ENCODE measurements at regions of chr1 and their contacts with region 1.

Region 1: GRCh38 chr1:94463765-94464330 is 45.7 kb downstream of the ABCD3 start:
- DNase-seq: no peak
- H3K4me3 Mint-ChIP-seq: no peak overlapping the region
- H3K27ac Mint-ChIP-seq: no peak overlapping the region
- H3K4me1 Mint-ChIP-seq: no peaks in the 10 kb centered on the region
- H3K27me3 Mint-ChIP-seq: no peaks in the 10 kb centered on the region

Region 2: GRCh38 chr1:94045465-94046056 is 418.3 kb before region 1 on chr1:
- CTCF ChIA-PET with region 1: interaction called, 6 read pairs
- POLR2A ChIA-PET with region 1: no interaction called
- intact Hi-C with region 1: loop called (anchors 1 kb)
- DNase-seq: peak; percentile 50
- H3K4me3 Mint-ChIP-seq: peak overlapping the region; percentile 41
- H3K27ac Mint-ChIP-seq: no peak overlapping the region
- H3K4me1 Mint-ChIP-seq: peaks cover 6% of the 10 kb centered on the region
- H3K27me3 Mint-ChIP-seq: peaks cover 13% of the 10 kb centered on the region

Region 3: GRCh38 chr1:94061513-94062443 is 402.1 kb before region 1 on chr1:
- CTCF ChIA-PET with region 1: interaction called, 15 read pairs
- POLR2A ChIA-PET with region 1: no interaction called
- intact Hi-C with region 1: loop called (anchors 1 kb)
- DNase-seq: peak; percentile 49
- H3K4me3 Mint-ChIP-seq: no peak overlapping the region
- H3K27ac Mint-ChIP-seq: no peak overlapping the region
- H3K4me1 Mint-ChIP-seq: no peaks in the 10 kb centered on the region
- H3K27me3 Mint-ChIP-seq: peaks cover 14% of the 10 kb centered on the region

Region 4: DNA sequence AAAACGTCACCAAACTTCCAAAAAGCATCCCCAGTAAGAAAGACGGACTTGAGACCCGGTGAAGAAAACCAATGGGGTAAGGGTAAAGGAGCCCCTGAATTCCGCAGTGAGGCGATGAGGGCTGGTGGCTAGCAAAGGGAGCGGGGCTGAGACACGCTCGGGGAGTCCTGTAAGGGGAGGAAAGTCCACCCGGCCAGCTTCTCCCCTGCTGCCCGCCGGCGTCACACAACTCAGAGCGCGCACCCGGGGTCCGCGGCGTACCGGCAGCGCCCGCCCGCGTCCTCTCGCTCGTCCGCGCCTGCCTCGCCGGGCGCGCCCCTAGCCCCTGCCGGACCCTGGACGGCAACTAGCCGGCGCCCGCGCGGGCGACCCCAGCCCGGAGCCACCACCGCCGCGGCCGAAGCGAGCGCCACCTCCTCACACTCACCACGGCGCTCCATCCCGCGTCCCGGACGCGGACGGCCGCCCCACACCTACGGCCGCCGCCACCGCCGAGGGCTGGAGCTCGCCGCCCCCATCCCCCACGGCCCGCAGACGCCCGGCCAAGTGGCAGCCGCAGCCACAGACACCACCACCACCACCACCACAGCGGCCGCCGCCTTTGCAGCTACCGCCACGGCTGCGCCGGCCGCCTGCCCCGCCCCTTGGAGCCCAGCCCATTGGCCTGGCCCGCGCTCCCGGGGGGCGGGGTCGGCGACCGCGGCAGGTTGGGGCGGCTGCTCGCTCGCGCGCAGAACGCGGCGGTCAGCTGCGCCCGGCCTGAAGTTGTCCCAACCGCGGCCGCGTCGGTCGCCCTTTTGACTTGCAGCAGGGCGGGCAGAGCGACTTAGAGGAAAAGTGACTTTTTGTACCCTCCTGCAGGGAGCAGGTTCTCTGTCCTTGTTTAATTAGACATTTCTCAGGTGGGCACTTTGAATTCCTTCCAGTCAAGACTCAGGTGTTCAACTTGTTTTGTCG is 216.4 kb before region 1 on chr1:
- CTCF ChIA-PET with region 1: no interaction called
- POLR2A ChIA-PET with region 1: no interaction called
- intact Hi-C with region 1: loop called (anchors 10 kb)
- DNase-seq: peak; percentile 36
- H3K4me3 Mint-ChIP-seq: peak overlapping the region; percentile 73
- H3K27ac Mint-ChIP-seq: no peak overlapping the region
- H3K4me1 Mint-ChIP-seq: peaks cover 10% of the 10 kb centered on the region
- H3K27me3 Mint-ChIP-seq: peaks cover 41% of the 10 kb centered on the region

Region 5: GRCh38 chr1:94481473-94481933 is 17.7 kb after region 1 on chr1:
- CTCF ChIA-PET with region 1: interaction called, 22 read pairs
- POLR2A ChIA-PET with region 1: no interaction called
- intact Hi-C with region 1: no loop called
- DNase-seq: peak; percentile 37
- H3K4me3 Mint-ChIP-seq: no peak overlapping the region
- H3K27ac Mint-ChIP-seq: no peak overlapping the region
- H3K4me1 Mint-ChIP-seq: no peaks in the 10 kb centered on the region
- H3K27me3 Mint-ChIP-seq: no peaks in the 10 kb centered on the region

Measured in activated CD4-positive, alpha-beta memory T cell treated with anti-CD3 and anti-CD28 coated beads for 36 hours (primary cell).